Breast epithelium (tissue), 4 donors: ENCODE measurements at regions of chr13 and their contacts with region 1.

Region 1: GRCh38 chr13:48994706-48995105 is 19.0 kb downstream of the FNDC3A start:
- DNase-seq: no peak
- H3K4me3 ChIP-seq: no peak overlapping the region
- H3K27ac ChIP-seq: no peak overlapping the region
- H3K4me1 ChIP-seq: no peaks in the 10 kb centered on the region
- H3K27me3 ChIP-seq: no peaks in the 10 kb centered on the region
- CTCF ChIP-seq: no peak
- POLR2A ChIP-seq: no peak

Region 2: GRCh38 chr13:48000778-48001628 is 993.7 kb before region 1 on chr13 and contains the start of gene SUCLA2:
- intact Hi-C with region 1: loop called (anchors 5 kb)
- DNase-seq: peak; percentile 80
- H3K4me3 ChIP-seq: peak within 1 kb of the TSS; percentile 92 to 99 (median 98)
- H3K27ac ChIP-seq: peak within 1 kb of the TSS; percentile 86 to 88
- H3K4me1 ChIP-seq: peaks cover 0 to 5% of the 10 kb centered on the region in 2 donors
- H3K27me3 ChIP-seq: no peaks in the 10 kb centered on the region
- CTCF ChIP-seq: no peak
- POLR2A ChIP-seq: peak; percentile 25
- total RNA-seq, gene SUCLA2: 42.3 to 75.4 (median 61.3) TPM

Region 3: DNA sequence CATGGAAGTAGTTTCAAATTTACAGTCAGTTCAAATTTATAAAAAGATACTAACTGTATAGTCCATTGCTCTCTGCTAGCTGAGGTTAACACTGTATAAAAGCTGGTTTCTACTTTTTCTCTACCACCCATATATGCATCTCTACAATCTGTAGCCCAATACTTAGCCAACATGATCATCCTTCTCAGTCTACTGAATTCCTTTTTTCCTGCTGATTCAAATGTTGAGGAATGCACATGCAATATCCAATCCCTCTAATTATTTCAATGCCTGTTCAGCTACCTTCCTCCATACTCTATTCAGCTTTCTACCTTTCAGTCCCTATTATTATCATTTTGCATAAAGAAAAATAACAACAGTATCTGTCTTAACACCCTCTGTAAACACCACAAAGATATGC is 782.2 kb after region 1 on chr13:
- intact Hi-C with region 1: no loop called
- DNase-seq: no peak
- H3K4me3 ChIP-seq: no peak overlapping the region
- H3K27ac ChIP-seq: no peak overlapping the region
- H3K4me1 ChIP-seq: no peaks in the 10 kb centered on the region
- H3K27me3 ChIP-seq: no peaks in the 10 kb centered on the region
- CTCF ChIP-seq: no peak
- POLR2A ChIP-seq: no peak

Region 4: DNA sequence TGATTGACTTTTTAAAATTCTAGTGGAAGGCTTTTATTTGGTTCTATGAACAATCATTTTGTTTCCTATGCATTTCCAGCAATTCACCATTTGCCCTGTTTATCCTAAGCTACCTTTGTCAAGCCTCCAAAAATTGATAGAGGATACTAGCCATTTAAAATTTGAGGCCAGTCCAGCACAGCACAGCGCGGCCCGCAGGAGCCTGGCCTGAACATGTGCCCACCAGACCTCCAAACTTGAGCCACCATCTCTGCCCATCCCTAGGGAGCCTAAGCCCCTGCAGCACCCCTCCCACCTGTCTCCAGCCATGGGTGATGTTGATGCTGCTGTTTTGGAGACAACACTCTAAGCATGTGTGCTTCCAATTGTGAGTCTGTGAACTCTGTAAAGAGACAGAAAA is 884.0 kb after region 1 on chr13:
- intact Hi-C with region 1: no loop called
- DNase-seq: no peak
- H3K4me3 ChIP-seq: no peak overlapping the region
- H3K27ac ChIP-seq: no peak overlapping the region
- H3K4me1 ChIP-seq: no peaks in the 10 kb centered on the region
- H3K27me3 ChIP-seq: no peaks in the 10 kb centered on the region
- CTCF ChIP-seq: no peak
- POLR2A ChIP-seq: no peak